MCF 10A (cell line): ENCODE measurements at regions of chr1 and their contacts with region 1.

Region 1: GRCh38 chr1:209565759-209566678 is 17.5 kb upstream of the CAMK1G start:
- DNase-seq: peak; percentile 97
- H3K4me3 Mint-ChIP-seq: peak overlapping the region; percentile 49
- H3K27ac Mint-ChIP-seq: no peak overlapping the region
- H3K4me1 Mint-ChIP-seq: peaks cover 62% of the 10 kb centered on the region
- H3K27me3 Mint-ChIP-seq: peaks cover 3% of the 10 kb centered on the region
- CTCF ChIP-seq: peak; percentile 98

Region 2: GRCh38 chr1:209383907-209384709 is 181.9 kb before region 1 on chr1:
- CTCF ChIA-PET with region 1: interaction called, 5 read pairs
- POLR2A ChIA-PET with region 1: interaction called, 11 read pairs
- intact Hi-C with region 1: no loop called
- DNase-seq: peak; percentile 72
- H3K4me3 Mint-ChIP-seq: peak overlapping the region; percentile 15
- H3K27ac Mint-ChIP-seq: peak overlapping the region; percentile 81
- H3K4me1 Mint-ChIP-seq: peaks cover 65% of the 10 kb centered on the region
- H3K27me3 Mint-ChIP-seq: no peaks in the 10 kb centered on the region
- CTCF ChIP-seq: no peak

Region 3: DNA sequence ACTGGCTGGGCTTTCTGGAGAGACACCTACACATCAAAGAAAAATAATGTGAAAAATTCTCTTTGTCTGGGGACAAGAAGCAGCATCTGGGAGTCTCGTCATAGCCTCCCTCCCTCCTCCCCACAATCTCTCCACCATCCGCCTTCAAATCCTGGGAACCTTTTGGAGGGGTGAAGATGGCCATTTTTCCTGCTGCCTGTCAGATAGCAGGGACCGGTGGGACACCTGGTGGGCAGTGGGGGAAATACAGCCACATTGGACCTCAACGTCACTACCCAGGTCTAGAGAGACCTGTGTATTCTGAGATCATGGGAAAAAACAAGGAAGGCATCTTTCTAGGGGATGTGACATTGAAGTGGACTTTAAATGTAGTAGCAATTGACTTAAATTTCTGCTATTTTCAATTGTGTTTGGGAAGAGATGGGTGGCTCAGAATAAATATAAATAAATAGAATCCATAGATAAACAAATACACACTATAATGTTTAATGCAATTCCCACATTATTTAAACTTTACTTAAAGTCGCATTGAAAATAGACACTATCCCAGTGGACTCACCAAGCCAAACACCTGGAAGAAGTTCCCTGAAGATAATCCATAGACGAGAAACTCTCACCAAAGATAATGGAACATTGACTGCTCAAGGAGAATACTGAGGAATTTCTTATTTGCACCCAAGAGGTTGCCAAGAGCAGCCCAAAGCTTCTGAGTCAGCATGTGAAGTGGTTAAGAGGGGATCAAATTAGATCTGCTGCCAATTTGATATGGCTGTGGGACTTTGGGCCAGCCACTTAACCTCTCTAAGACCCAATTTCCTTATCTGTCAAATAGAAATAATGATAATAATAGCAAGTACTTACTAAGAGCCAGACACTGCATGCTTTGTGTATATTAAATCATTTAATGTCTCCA is 130.1 kb before region 1 on chr1:
- CTCF ChIA-PET with region 1: interaction called, 105 read pairs
- POLR2A ChIA-PET with region 1: interaction called, 174 read pairs
- intact Hi-C with region 1: loop called (anchors 1 kb)
- DNase-seq: peak; percentile 97
- H3K4me3 Mint-ChIP-seq: no peak overlapping the region
- H3K27ac Mint-ChIP-seq: peak overlapping the region; percentile 90
- H3K4me1 Mint-ChIP-seq: peaks cover 51% of the 10 kb centered on the region
- H3K27me3 Mint-ChIP-seq: no peaks in the 10 kb centered on the region
- CTCF ChIP-seq: peak; percentile 100

Region 4: DNA sequence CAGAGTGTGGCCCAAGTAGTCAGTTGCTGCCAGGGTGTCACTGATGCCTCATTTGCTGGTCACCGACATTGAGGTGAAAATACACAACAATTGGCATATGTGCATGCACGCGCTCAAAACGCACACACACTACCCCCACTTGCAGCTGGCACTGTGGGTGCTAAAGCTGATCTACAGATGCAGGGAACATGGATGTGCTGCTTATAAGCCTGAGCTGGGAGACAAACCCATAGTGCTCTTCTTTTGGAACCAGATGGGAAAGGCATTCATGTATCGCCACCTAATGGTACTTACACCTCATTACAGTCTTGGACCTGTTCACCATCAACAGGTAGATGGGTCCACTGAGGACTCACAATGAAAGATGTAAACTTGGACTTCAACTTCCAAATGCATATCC is 52.8 kb before region 1 on chr1:
- CTCF ChIA-PET with region 1: interaction called, 198 read pairs
- POLR2A ChIA-PET with region 1: interaction called, 22 read pairs
- intact Hi-C with region 1: loop called (anchors 1 kb)
- DNase-seq: peak; percentile 84
- H3K4me3 Mint-ChIP-seq: no peak overlapping the region
- H3K27ac Mint-ChIP-seq: no peak overlapping the region
- H3K4me1 Mint-ChIP-seq: peaks cover 11% of the 10 kb centered on the region
- H3K27me3 Mint-ChIP-seq: no peaks in the 10 kb centered on the region
- CTCF ChIP-seq: peak; percentile 93

Region 5: GRCh38 chr1:209576798-209577197 is 10.8 kb after region 1 on chr1:
- CTCF ChIA-PET with region 1: interaction called, 394 read pairs
- POLR2A ChIA-PET with region 1: no interaction called
- intact Hi-C with region 1: no loop called
- DNase-seq: peak; percentile 97
- H3K4me3 Mint-ChIP-seq: no peak overlapping the region
- H3K27ac Mint-ChIP-seq: no peak overlapping the region
- H3K4me1 Mint-ChIP-seq: peaks cover 8% of the 10 kb centered on the region
- H3K27me3 Mint-ChIP-seq: peaks cover 19% of the 10 kb centered on the region
- CTCF ChIP-seq: peak; percentile 100

Region 6: DNA sequence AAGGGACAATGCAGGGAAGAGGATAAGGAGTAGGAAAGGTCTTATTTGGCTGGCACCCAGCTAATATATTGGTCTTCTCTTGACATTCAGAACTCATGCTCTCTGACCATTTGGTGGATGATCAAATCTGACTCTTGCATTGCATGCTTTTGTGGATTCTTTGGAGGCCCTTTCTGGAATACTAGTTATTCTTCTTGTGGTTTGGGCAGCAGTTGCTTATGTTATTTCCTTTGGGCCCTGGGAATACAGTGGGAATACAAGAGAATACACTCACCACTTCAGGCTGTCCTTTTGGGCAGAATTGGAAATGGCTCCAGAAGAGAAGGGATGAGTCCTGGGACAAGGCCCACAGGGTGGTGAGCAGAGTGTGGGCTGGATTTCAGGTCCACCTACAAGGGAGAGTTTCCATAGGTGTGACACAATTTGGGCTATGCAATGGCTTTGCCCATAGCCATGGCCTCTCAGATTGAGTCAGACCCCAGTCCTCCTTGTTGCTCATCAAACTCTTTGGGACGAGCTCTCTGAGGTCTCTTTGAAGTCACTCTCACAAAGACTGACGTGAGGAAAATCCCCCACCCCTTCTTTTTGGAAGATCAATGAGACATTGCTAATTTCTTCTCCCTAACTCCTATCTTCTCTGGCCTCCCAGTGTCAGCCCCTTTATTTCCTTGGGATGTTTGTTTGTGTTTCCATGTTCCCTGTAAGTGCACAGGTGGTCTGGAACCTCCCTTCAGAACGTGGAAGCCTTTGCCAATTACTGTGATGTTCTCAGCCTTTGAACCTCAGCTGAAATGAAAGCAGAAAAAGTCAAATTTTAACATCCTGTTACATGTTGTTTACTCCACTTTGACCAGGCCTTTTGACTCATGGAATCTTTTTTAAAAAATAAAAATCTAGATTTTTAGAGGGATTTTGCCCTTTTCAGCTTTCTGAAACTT is 158.0 kb after region 1 on chr1:
- CTCF ChIA-PET with region 1: interaction called, 10 read pairs
- POLR2A ChIA-PET with region 1: interaction called, 5 read pairs
- intact Hi-C with region 1: no loop called
- DNase-seq: no peak
- H3K4me3 Mint-ChIP-seq: no peak overlapping the region
- H3K27ac Mint-ChIP-seq: no peak overlapping the region
- H3K4me1 Mint-ChIP-seq: no peaks in the 10 kb centered on the region
- H3K27me3 Mint-ChIP-seq: no peaks in the 10 kb centered on the region
- CTCF ChIP-seq: no peak